ENCODE measurements at regions of chr2 and their contacts with region 1.

Region 1: GRCh38 chr2:128494640-128495321 is 176.1 kb upstream of the HS6ST1 start:
- DNase-seq: no peak
- H3K4me3 ChIP-seq: no peak overlapping the region
- H3K27ac ChIP-seq: no peak overlapping the region
- H3K4me1 ChIP-seq: no peaks in the 10 kb centered on the region
- H3K27me3 ChIP-seq: no peaks in the 10 kb centered on the region
- CTCF ChIP-seq: no peak
- EP300 ChIP-seq: no peak
- POLR2A ChIP-seq: no peak

Region 2: GRCh38 chr2:129518937-129519336 is 1024.2 kb after region 1 on chr2:
- in situ Hi-C with region 1: no loop called
- intact Hi-C with region 1: loop called (anchors 5 kb)
- DNase-seq: no peak
- H3K4me3 ChIP-seq: no peak overlapping the region
- H3K27ac ChIP-seq: no peak overlapping the region
- H3K4me1 ChIP-seq: no peaks in the 10 kb centered on the region
- H3K27me3 ChIP-seq: no peaks in the 10 kb centered on the region
- CTCF ChIP-seq: no peak
- EP300 ChIP-seq: no peak
- POLR2A ChIP-seq: no peak